HCT116 (cell line): ENCODE measurements at regions of chr3 and their contacts with region 1.

Region 1: DNA sequence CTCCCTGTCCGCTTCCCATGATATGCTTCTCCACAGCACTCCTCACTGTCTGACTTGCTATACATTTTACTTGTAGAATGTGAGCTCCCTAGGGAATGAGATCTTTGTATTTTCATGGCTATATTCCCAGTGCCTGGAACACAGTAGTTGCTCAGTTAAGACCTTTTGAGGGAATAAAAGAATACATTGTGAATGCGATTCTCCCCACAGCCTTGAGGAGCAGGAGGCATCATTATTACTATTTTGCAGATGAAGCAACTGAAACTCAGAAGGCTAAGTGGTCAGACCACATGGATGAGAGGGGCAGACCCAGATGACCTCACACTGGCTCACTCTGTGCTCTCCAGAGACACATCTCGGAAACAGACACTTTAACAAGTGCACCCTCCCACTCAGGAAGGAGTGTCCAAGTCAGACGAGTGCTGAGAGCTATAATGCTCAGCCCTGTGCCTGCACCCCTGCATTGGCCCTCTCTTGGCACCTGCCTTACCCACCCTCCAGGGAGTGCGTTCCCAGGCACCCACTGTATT is 46.8 kb downstream of the SST start:
- DNase-seq: no peak
- ATAC-seq: no peak
- H3K4me3 ChIP-seq: no peak overlapping the region
- H3K27ac ChIP-seq: no peak overlapping the region
- H3K4me1 ChIP-seq: no peaks in the 10 kb centered on the region
- H3K27me3 ChIP-seq: peaks cover 18% of the 10 kb centered on the region
- CTCF ChIP-seq: no peak
- POLR2A ChIP-seq: no peak
- RAD21 ChIP-seq: no peak

Region 2: GRCh38 chr3:187481426-187481825 is 141.9 kb before region 1 on chr3:
- CTCF ChIA-PET with region 1: no interaction called
- POLR2A ChIA-PET with region 1: no interaction called
- RAD21 ChIA-PET with region 1: no interaction called
- intact Hi-C with region 1: no loop called
- DNase-seq: no peak
- ATAC-seq: no peak
- H3K4me3 ChIP-seq: no peak overlapping the region
- H3K27ac ChIP-seq: no peak overlapping the region
- H3K4me1 ChIP-seq: no peaks in the 10 kb centered on the region
- H3K27me3 ChIP-seq: no peaks in the 10 kb centered on the region
- CTCF ChIP-seq: no peak
- POLR2A ChIP-seq: no peak
- RAD21 ChIP-seq: no peak

Region 3: GRCh38 chr3:187669675-187670504 is 46.5 kb after region 1 on chr3 and contains the start of gene SST:
- CTCF ChIA-PET with region 1: no interaction called
- POLR2A ChIA-PET with region 1: no interaction called
- RAD21 ChIA-PET with region 1: no interaction called
- intact Hi-C with region 1: loop called (anchors 5 kb)
- DNase-seq: no peak
- ATAC-seq: no peak
- H3K4me3 ChIP-seq: no peak within 1 kb of the TSS
- H3K27ac ChIP-seq: no peak within 1 kb of the TSS
- H3K4me1 ChIP-seq: no peaks in the 10 kb centered on the region
- H3K27me3 ChIP-seq: peaks cover 91% of the 10 kb centered on the region
- CTCF ChIP-seq: no peak
- POLR2A ChIP-seq: no peak
- RAD21 ChIP-seq: no peak
- total RNA-seq, gene SST: not detected